Activated CD4-positive, alpha-beta memory T cell treated with anti-CD3 and anti-CD28 coated beads for 36 hours (primary cell): ENCODE measurements at regions of chr17 and their contacts with region 1.

Region 1: DNA sequence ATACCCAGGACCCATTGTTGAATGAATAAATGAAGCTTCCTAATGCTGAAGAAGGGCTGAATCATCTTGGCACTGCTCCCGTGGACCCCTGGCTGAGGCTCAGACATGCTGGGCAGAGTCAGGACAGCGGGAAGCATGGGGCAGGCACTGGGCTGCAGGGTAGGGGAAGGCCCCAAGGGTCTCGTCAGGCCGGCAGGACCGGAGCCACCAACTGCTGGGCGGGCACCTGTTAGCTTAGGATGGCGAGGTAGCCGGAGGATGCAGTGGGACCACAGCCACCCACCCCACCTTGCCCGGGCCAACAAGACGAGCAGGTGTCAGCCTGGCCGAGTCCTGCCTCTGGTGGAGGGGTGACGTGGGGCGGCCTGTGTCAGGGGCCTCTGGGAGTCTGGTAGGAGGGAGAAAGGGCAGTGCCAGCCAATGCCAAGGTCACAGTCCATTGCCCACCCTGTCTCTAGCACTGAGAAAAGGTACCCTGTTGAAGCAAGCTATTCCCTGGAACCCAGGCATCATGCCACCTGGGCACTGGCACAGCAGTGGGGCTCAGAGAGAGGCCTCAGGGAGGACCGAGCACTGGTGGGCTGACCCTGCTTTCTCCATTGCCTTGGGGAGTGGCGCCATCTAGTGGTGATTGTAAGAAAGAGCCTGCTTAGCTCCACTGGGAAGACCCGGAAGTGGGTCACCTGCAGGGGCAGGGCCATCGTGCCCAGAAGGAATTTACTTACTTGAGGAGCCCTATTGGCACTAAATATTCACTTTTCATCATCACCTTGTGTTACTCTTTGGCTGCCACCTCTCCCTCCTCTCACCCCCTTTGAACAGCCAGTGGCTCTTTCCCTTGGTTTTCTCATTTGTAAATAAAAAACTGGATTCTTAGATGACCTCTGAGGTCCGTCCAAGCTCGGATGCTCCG is 3.0 kb upstream of the DLX3 start:
- DNase-seq: peak; percentile 89
- H3K4me3 Mint-ChIP-seq: no peak overlapping the region
- H3K27ac Mint-ChIP-seq: no peak overlapping the region
- H3K4me1 Mint-ChIP-seq: peaks cover 22% of the 10 kb centered on the region
- H3K27me3 Mint-ChIP-seq: peaks cover 70% of the 10 kb centered on the region

Region 2: DNA sequence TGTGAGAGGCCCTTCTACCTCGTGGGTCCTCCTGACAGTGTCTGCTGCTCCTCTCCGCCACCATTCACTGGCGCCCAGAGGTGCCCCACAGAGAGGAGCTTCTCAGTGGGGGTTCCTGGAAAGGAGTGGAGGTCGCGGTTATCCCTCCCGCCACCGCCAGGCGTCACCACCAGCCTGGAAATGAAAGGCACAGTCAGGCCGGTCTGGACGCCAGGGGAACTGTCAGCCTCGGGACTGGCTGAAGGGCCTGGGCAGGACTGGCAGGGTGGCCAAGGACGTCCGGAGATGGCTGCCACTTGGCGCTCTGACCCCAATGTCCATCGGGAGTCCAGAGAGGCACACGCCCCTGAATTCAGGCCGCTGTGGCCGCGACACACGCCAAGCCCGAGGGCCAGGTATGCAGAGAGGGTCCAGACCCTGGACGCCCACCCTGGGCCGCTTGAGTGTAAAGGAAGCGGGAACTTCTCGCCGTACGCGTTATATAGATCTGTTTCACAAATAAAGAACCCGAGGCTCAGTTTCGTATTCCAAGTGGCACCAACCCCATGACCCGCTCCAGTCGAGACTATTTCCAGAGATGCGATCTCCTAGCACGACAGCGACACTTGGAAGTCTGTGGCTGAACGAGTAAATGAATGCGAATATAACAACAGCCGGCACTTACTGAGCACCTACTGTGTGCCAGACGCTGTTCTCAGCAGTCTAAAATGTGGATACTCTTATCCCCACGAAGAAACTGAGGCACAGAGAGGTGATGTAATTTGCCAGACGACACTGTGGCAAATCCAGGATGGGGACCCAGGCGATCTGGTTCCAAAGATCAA is 430.0 kb before region 1 on chr17:
- CTCF ChIA-PET with region 1: interaction called, 40 read pairs
- POLR2A ChIA-PET with region 1: no interaction called
- intact Hi-C with region 1: loop called (anchors 2 kb)
- DNase-seq: peak; percentile 90
- H3K4me3 Mint-ChIP-seq: peak overlapping the region; percentile 67
- H3K27ac Mint-ChIP-seq: no peak overlapping the region
- H3K4me1 Mint-ChIP-seq: peaks cover 16% of the 10 kb centered on the region
- H3K27me3 Mint-ChIP-seq: peaks cover 14% of the 10 kb centered on the region

Region 3: DNA sequence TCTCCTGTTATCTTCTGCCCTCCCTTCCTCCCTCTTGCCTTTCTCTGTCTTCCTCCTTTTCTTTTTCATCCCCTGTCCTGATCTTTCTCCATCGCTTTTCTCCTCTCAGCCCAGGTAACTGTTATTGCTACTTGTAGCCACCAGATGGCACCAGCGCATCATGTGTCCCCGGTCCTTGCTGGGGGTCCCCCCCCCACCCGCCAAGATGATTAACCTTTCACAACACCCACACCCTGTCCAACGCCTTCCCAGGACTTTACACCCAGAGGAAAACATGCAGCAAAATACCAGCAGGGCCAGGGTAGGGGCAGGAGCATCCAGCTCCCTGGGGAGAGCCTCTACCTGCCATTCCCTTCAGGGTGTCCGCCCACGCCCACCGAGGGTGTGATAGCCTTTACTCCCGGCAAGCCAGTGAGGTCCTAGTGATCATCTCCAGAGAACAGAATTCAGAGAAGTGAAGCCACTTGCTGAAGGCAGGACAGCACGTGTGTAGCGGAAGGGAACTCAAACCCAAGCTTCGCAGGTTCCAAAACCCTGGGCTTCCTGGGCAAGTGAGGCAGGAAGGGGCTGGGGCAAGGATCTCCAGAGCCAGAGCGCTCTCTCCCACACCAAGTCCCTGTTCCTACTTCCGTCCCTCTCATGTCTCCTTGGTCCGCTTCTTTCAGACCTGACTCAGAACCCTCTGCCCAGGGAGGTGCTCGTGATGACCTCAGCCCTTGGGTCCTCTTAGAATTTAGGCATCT is 136.7 kb before region 1 on chr17:
- CTCF ChIA-PET with region 1: interaction called, 222 read pairs
- POLR2A ChIA-PET with region 1: interaction called, 4 read pairs
- intact Hi-C with region 1: loop called (anchors 1 kb)
- DNase-seq: peak; percentile 59
- H3K4me3 Mint-ChIP-seq: no peak overlapping the region
- H3K27ac Mint-ChIP-seq: no peak overlapping the region
- H3K4me1 Mint-ChIP-seq: peaks cover 4% of the 10 kb centered on the region
- H3K27me3 Mint-ChIP-seq: peaks cover 9% of the 10 kb centered on the region

Region 4: GRCh38 chr17:49910094-49910857 is 87.8 kb before region 1 on chr17:
- CTCF ChIA-PET with region 1: interaction called, 28 read pairs
- POLR2A ChIA-PET with region 1: no interaction called
- intact Hi-C with region 1: no loop called
- DNase-seq: peak; percentile 55
- H3K4me3 Mint-ChIP-seq: peak overlapping the region; percentile 23
- H3K27ac Mint-ChIP-seq: no peak overlapping the region
- H3K4me1 Mint-ChIP-seq: peaks cover 4% of the 10 kb centered on the region
- H3K27me3 Mint-ChIP-seq: peaks cover 59% of the 10 kb centered on the region

Region 5: GRCh38 chr17:49944273-49944890 is 53.7 kb before region 1 on chr17:
- CTCF ChIA-PET with region 1: interaction called, 264 read pairs
- POLR2A ChIA-PET with region 1: no interaction called
- intact Hi-C with region 1: no loop called
- DNase-seq: no peak
- H3K4me3 Mint-ChIP-seq: no peak overlapping the region
- H3K27ac Mint-ChIP-seq: no peak overlapping the region
- H3K4me1 Mint-ChIP-seq: no peaks in the 10 kb centered on the region
- H3K27me3 Mint-ChIP-seq: peaks cover 25% of the 10 kb centered on the region

Region 6: DNA sequence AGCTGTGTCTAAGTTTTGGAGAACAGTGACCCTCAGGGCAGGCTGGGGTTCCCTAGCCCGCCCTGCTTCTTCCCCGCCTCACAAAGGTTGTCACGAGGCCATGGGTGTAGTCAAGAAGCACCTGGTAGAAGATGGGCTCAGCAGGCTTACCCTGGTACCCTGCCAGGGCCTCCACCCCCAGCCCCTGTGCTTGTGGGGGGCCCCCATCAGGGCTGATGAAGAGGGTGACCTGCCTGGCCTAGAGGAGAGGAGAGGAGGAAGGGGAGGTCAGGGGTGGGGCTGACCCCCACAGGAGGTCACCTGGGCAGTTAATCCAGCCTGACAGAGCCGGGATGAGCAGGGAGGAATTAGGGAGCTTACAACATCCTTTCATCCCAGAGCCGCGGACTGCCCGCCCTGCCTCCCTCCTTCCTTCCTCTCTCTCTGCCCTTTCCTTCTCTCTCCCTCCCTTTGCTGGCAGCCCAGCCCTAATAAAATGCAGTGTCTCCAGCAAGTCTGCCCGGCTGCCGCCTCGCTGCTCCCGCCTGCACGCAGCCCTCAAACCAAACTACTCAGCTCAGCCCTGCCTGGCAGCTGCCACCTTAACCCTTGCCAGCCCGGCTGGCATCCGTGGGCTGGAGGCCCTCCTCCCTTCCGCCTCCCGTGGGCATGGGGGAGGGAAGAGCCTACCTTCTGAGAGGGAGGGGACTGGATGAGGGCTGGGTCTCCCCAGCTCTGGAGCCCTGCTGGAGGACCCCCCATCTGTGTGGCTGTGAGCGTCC is 10.2 kb before region 1 on chr17:
- CTCF ChIA-PET with region 1: interaction called, 21 read pairs
- POLR2A ChIA-PET with region 1: no interaction called
- intact Hi-C with region 1: no loop called
- DNase-seq: no peak
- H3K4me3 Mint-ChIP-seq: no peak overlapping the region
- H3K27ac Mint-ChIP-seq: no peak overlapping the region
- H3K4me1 Mint-ChIP-seq: no peaks in the 10 kb centered on the region
- H3K27me3 Mint-ChIP-seq: peaks cover 52% of the 10 kb centered on the region

Region 7: DNA sequence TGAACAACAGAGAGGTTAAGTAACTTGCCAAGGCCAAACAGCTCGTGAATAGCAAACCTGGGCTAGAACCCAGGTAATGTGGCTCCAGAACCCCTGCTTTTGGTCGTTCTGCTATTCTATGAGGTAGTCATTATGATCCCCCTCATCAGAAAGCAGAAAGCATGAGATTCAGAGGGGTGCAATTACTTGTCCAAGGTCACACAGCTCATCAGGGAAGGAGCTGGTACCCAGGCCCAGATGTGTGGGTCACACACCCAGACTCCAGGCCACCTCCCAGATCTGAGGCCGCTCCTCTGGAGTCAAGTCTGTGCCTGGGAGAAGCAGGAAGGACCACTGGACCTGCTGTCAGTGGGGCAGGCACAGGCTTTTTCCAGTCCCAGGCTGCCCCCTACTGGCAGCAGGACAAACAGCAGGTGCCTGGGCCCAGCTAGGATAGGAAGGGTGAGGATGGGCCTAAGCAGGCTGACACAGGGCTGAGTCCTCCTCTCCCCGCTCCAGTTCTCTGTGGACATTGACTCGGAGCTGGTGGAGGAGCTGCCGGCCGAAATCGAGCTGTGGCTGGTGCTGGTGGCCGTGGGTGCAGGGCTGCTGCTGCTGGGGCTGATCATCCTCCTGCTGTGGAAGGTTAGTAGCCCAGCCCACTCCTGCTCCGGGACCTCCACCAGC is 89.3 kb after region 1 on chr17:
- CTCF ChIA-PET with region 1: interaction called, 25 read pairs
- POLR2A ChIA-PET with region 1: no interaction called
- intact Hi-C with region 1: no loop called
- DNase-seq: peak; percentile 85
- H3K4me3 Mint-ChIP-seq: no peak overlapping the region
- H3K27ac Mint-ChIP-seq: no peak overlapping the region
- H3K4me1 Mint-ChIP-seq: no peaks in the 10 kb centered on the region
- H3K27me3 Mint-ChIP-seq: no peaks in the 10 kb centered on the region